Activated T-helper 2 cell treated with anti-CD3 and anti-CD28 coated beads, Interferon-gamma antibody, Interleukin-2, Interleukin-4, amounts not matched to agents 10 μg/mL and 5 μg/mL and 100 μg/mL, durations not matched to agents 14 hours and 24 hours and 36 hours (primary cell): ENCODE measurements at regions of chr16 and their contacts with region 1.

Region 1: GRCh38 chr16:80231888-80232287 is 308.9 kb upstream of the DYNLRB2 start:
- DNase-seq: no peak
- H3K4me3 Mint-ChIP-seq: no peak overlapping the region
- H3K27ac Mint-ChIP-seq: peak overlapping the region; percentile 64
- H3K4me1 Mint-ChIP-seq: peaks cover 7% of the 10 kb centered on the region
- H3K27me3 Mint-ChIP-seq: no peaks in the 10 kb centered on the region

Region 2: GRCh38 chr16:79874391-79874790 is 357.5 kb before region 1 on chr16:
- intact Hi-C with region 1: no loop called
- DNase-seq: no peak
- H3K4me3 Mint-ChIP-seq: no peak overlapping the region
- H3K27ac Mint-ChIP-seq: no peak overlapping the region
- H3K4me1 Mint-ChIP-seq: no peaks in the 10 kb centered on the region
- H3K27me3 Mint-ChIP-seq: peaks cover 5% of the 10 kb centered on the region

Region 3: GRCh38 chr16:80084685-80085084 is 147.2 kb before region 1 on chr16:
- intact Hi-C with region 1: no loop called
- DNase-seq: peak; percentile 10
- H3K4me3 Mint-ChIP-seq: no peak overlapping the region
- H3K27ac Mint-ChIP-seq: no peak overlapping the region
- H3K4me1 Mint-ChIP-seq: no peaks in the 10 kb centered on the region
- H3K27me3 Mint-ChIP-seq: peaks cover 1% of the 10 kb centered on the region

Region 4: DNA sequence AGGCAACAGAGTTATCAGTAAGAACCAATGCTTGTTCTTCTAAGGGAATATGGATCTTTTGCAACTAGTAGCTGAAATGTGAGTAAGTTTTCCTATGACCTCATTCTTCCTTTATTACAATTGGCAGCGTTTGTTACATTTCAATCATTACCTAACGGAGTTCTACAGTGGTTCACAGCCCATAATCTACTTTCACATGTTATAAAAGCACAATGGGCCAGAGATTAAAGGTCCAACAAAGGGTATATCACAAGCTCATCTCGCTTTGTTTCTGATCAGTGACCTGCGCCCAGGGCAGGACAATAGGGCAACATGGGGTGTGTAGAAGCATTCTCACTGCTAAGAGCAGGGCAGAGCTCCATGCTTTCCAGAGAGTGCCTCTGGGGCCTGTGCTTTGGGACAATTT is 29.0 kb after region 1 on chr16:
- intact Hi-C with region 1: loop called (anchors 2 kb)
- DNase-seq: no peak
- H3K4me3 Mint-ChIP-seq: no peak overlapping the region
- H3K27ac Mint-ChIP-seq: no peak overlapping the region
- H3K4me1 Mint-ChIP-seq: peaks cover 11% of the 10 kb centered on the region
- H3K27me3 Mint-ChIP-seq: no peaks in the 10 kb centered on the region